ENCODE measurements at regions of chr1 and their contacts with region 1.

Region 1: DNA sequence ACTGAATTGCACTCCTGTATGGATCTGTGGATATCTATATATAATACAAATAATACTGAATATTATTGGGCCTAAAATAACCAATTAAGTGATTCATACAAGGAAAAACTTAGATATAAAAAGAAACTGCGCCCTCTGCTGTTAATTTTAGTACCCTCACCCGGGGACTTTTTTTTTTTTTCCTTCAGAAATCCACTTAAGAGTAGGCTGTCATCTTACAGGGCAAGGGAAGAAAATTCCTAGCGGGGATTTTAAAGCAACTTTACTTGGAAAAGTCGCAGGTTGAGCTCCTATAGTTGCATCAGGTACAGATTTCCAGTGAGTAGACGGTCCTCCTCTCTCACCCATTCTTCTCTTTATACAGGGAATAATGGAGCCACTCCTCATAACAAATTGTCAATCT is 1.3 kb downstream of the NTNG1 start:
- DNase-seq: peak; percentile 65
- H3K4me3 ChIP-seq: no peak overlapping the region
- H3K27ac ChIP-seq: no peak overlapping the region
- H3K4me1 ChIP-seq: peaks cover 8% of the 10 kb centered on the region
- H3K27me3 ChIP-seq: peaks cover 17 to 19% of the 10 kb centered on the region in 2 experiments
- CTCF ChIP-seq: peak; percentile 38
- POLR2A ChIP-seq: no peak

Region 2: GRCh38 chr1:106022312-106022902 is 1119.7 kb before region 1 on chr1:
- CTCF ChIA-PET with region 1: interaction called, 3 read pairs
- POLR2A ChIA-PET with region 1: no interaction called
- dilution Hi-C with region 1: no loop called
- intact Hi-C with region 1: loop called (anchors 1 kb)
- DNase-seq: no peak
- H3K4me3 ChIP-seq: no peak overlapping the region
- H3K27ac ChIP-seq: no peak overlapping the region
- H3K4me1 ChIP-seq: no peaks in the 10 kb centered on the region
- H3K27me3 ChIP-seq: no peaks in the 10 kb centered on the region
- CTCF ChIP-seq: peak in 1 of 2 donors; percentile 6
- POLR2A ChIP-seq: no peak

Region 3: DNA sequence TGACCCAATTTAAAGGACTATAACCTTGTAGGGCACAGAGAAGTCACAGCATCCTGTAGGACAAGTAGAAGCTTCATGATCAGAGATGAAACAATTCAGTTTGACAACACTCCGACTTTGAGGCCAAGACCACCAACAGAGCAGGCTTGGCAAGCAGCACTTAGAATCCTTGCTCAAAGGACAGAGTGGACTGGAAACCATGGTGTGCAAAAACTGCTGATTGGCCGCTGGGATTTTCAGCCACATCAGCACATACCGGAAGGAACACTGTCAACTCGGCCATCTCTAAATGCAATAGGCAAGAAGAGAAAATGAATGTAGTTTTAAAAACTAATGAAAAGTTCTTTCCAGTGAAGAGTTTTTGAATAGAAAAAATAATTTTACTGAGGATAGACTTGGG is 177.6 kb before region 1 on chr1:
- CTCF ChIA-PET with region 1: no interaction called
- POLR2A ChIA-PET with region 1: no interaction called
- dilution Hi-C with region 1: no loop called
- intact Hi-C with region 1: no loop called
- DNase-seq: no peak
- H3K4me3 ChIP-seq: no peak overlapping the region
- H3K27ac ChIP-seq: no peak overlapping the region
- H3K4me1 ChIP-seq: no peaks in the 10 kb centered on the region
- H3K27me3 ChIP-seq: no peaks in the 10 kb centered on the region
- CTCF ChIP-seq: no peak
- POLR2A ChIP-seq: no peak

Region 4: GRCh38 chr1:107056426-107057196 is 85.5 kb before region 1 on chr1 and contains the start of gene PRMT6:
- CTCF ChIA-PET with region 1: interaction called, 8 read pairs
- POLR2A ChIA-PET with region 1: no interaction called
- dilution Hi-C with region 1: no loop called
- intact Hi-C with region 1: loop called (anchors 1 kb)
- DNase-seq: peak; percentile 77
- H3K4me3 ChIP-seq: peak within 1 kb of the TSS; percentile 30 to 75 (median 73)
- H3K27ac ChIP-seq: peak within 1 kb of the TSS; percentile 29
- H3K4me1 ChIP-seq: peaks cover 6% of the 10 kb centered on the region
- H3K27me3 ChIP-seq: no peaks in the 10 kb centered on the region
- CTCF ChIP-seq: no peak
- POLR2A ChIP-seq: peak; percentile 50
- total RNA-seq, gene PRMT6: 12.5 and 13.3 TPM in 2 replicates

Region 5: DNA sequence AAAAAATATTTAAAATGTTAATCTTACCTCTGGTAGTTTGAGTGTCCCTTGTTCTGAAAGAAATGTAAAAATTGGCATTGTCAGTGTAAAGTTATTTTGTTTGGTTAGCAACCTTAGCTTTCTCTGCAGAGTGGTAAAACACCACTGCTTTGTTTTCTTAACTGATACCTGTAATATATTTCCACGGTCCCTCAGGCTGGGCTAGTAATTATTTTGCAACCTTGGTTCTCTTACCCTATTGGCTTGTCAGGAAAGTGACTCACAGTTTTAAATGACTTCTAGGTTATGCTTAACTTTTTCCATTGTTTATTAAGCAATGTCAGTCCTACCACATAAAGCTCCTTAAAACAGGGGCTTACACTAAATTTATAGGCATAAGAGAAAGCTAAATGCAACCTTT is 546.2 kb after region 1 on chr1:
- CTCF ChIA-PET with region 1: no interaction called
- POLR2A ChIA-PET with region 1: no interaction called
- dilution Hi-C with region 1: no loop called
- intact Hi-C with region 1: no loop called
- DNase-seq: no peak
- H3K4me3 ChIP-seq: no peak overlapping the region
- H3K27ac ChIP-seq: no peak overlapping the region
- H3K4me1 ChIP-seq: no peaks in the 10 kb centered on the region
- H3K27me3 ChIP-seq: no peaks in the 10 kb centered on the region
- CTCF ChIP-seq: no peak
- POLR2A ChIP-seq: no peak

Measured in endothelial cell of umbilical vein (primary cell).